Calu3 (cell line): ENCODE measurements at regions of chrX and their contacts with region 1.

Region 1: DNA sequence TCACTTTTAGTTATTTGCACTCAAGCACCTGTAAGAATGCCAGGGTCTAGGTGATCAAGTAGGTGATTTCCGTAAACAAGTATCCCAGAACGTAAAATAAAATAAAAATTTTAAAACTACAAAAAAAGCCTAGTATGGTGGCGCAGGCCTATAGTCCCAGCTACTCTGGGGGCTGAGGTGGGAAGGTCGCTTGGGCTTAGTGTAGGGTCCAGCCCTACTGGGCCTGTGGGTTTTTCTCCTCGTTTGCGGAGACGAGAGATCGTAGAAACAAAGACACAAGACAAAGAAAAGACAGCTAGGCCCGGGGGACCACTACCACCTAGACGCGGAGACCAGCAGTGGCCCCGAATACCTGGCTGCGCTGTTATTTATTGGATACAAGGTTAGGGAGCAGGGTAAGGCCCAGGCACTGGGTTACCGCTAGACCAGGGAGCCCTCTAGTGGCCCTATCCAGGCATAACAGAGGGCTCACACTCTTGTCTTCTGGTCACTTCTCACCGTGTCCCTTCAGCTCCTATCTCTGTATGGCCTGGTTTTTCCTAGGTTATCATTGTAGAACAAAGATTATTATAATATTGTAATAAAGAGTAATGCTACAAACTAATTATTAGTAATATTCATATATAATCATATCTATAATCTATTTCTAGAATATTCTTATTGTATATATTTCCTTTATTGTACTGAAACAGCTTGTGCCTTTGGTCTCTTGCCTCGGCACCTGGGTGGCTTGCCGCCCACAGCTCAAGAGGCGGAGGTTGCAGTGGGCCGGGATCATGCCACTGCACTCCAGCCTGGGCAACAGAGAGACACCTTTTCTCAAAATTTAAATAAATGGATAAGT is 38.4 kb downstream of the SAGE1 start:
- DNase-seq: peak; percentile 59
- H3K4me3 Mint-ChIP-seq: no peak overlapping the region
- H3K27ac Mint-ChIP-seq: no peak overlapping the region
- H3K4me1 Mint-ChIP-seq: no peaks in the 10 kb centered on the region
- H3K27me3 Mint-ChIP-seq: peaks cover 41% of the 10 kb centered on the region
- CTCF ChIP-seq: peak; percentile 36

Region 2: GRCh38 chrX:135632353-135632752 is 299.5 kb before region 1 on chrX:
- CTCF ChIA-PET with region 1: no interaction called
- intact Hi-C with region 1: loop called (anchors 2 kb)
- DNase-seq: no peak
- H3K4me3 Mint-ChIP-seq: no peak overlapping the region
- H3K27ac Mint-ChIP-seq: no peak overlapping the region
- H3K4me1 Mint-ChIP-seq: no peaks in the 10 kb centered on the region
- H3K27me3 Mint-ChIP-seq: peaks cover 13% of the 10 kb centered on the region
- CTCF ChIP-seq: no peak

Region 3: DNA sequence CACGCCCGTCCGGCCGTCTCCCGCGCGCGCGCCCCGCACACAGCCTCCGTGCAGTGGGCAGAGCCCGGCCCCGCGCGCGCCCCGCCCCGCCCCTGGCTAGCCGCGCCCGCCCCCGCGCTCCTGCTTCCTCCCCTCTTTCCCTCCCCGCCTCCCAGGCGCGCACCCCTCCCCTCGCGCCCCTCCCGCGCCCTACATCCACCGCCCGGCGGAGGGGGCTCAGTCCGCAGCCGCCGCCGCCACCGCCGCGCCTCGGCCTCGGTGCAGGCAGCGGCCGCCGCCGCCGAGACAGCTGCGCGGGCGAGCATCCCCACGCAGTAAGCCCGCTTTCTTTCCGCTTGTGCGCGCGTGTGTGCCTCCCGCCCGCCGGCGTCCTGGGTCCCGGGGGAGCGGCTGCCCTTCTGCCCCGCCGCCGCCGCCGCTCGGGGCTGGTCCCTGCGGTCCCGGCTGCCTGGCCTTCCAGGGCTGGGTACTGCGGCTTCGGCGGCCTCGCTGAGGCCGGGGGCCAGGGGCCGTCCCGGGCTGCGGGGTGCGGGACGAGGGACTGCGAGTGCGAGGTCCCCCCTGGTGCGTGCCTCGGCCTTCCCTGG is 215.5 kb after region 1 on chrX and contains the start of gene FHL1:
- CTCF ChIA-PET with region 1: no interaction called
- intact Hi-C with region 1: no loop called
- DNase-seq: no peak
- H3K4me3 Mint-ChIP-seq: peak within 1 kb of the TSS; percentile 60
- H3K27ac Mint-ChIP-seq: no peak within 1 kb of the TSS
- H3K4me1 Mint-ChIP-seq: no peaks in the 10 kb centered on the region
- H3K27me3 Mint-ChIP-seq: peaks cover 39% of the 10 kb centered on the region
- CTCF ChIP-seq: no peak
- total RNA-seq, gene FHL1: 0.54 and 0.73 TPM in 2 replicates